ENCODE measurements at regions of chr12 and their contacts with region 1.

Region 1: GRCh38 chr12:116559162-116559935 is at the start of gene MAP1LC3B2:
- DNase-seq: peak; percentile 95
- H3K4me3 Mint-ChIP-seq: peak within 1 kb of the TSS; percentile 82
- H3K27ac Mint-ChIP-seq: peak within 1 kb of the TSS; percentile 97
- H3K4me1 Mint-ChIP-seq: peaks cover 37% of the 10 kb centered on the region
- H3K27me3 Mint-ChIP-seq: peaks cover 9% of the 10 kb centered on the region
- total RNA-seq, gene MAP1LC3B2: 0.68 TPM in 1 of 2 replicates, not detected in the other

Region 2: DNA sequence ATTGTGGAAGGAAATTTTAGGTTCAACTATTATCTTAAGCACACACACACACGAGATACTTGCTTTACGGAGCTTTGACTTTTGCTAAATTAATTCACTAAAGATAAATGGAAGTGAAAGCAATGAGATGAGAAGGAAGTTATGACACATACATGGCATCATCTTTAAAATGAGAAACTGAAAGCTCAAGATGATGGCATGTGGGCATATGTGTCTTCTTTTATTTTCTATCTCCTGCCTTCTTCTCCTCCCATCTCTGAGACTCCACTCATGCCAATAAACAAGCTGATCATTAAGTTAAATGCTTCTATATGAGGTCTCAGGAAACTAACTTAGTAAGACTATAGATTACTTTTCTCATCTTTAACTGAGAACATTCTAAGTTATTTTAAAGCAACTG is 498.6 kb before region 1 on chr12:
- intact Hi-C with region 1: loop called (anchors 1 kb)
- DNase-seq: peak; percentile 69
- H3K4me3 Mint-ChIP-seq: peak overlapping the region; percentile 81
- H3K27ac Mint-ChIP-seq: peak overlapping the region; percentile 91
- H3K4me1 Mint-ChIP-seq: peaks cover 22% of the 10 kb centered on the region
- H3K27me3 Mint-ChIP-seq: no peaks in the 10 kb centered on the region

Region 3: DNA sequence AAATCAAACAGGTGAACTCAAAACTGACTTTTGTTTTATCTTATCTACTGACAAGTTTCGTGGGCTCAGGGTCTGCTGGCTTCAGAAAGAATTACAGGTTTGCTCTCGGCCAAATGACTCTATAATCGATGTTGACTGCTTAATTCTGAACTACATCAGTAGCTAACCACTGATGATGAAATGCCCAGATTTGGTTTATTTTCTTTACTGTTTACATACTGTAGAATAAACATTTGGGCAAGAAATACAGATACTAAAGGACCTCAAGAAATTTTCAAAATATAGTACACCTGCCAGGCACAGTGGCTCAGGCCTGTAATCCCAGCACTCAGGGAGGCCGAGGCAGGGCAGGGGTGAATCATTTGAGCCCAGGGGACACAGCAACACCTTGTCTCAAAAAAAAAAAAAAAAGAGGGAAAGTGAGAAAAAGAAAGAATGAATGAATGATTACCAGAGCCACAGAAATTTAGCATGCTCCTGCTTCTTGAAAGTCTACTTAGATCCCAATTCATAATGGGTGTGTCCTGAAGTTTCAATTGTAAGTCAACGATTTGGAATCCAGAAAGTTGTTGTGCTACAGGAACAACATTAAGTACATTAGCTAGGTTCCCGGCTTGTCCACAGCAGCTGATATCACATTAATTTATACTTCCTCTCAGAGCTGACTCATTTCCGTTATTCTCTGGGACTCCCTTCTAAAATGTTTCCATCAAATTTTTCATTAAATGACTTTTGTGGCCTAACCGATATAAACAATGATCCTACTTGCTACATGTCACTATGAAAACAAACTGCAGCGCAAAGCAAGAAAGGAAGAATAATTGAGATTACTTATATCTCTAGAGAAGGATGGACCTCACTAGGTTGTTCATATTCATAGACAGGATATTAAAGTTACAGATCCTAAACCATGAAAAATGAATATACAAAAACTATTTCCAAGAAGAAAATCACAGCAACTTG is 416.1 kb before region 1 on chr12:
- intact Hi-C with region 1: loop called (anchors 2 kb)
- DNase-seq: no peak
- H3K4me3 Mint-ChIP-seq: peak overlapping the region; percentile 2
- H3K27ac Mint-ChIP-seq: peak overlapping the region; percentile 62
- H3K4me1 Mint-ChIP-seq: peaks cover 45% of the 10 kb centered on the region
- H3K27me3 Mint-ChIP-seq: no peaks in the 10 kb centered on the region

Region 4: GRCh38 chr12:116325336-116325664 is 234.0 kb before region 1 on chr12:
- intact Hi-C with region 1: loop called (anchors 2 kb)
- DNase-seq: peak; percentile 84
- H3K4me3 Mint-ChIP-seq: peak overlapping the region; percentile 51
- H3K27ac Mint-ChIP-seq: peak overlapping the region; percentile 81
- H3K4me1 Mint-ChIP-seq: peaks cover 29% of the 10 kb centered on the region
- H3K27me3 Mint-ChIP-seq: no peaks in the 10 kb centered on the region

Region 5: GRCh38 chr12:116591855-116592637 is 32.7 kb after region 1 on chr12:
- intact Hi-C with region 1: loop called (anchors 2 kb)
- DNase-seq: no peak
- H3K4me3 Mint-ChIP-seq: no peak overlapping the region
- H3K27ac Mint-ChIP-seq: no peak overlapping the region
- H3K4me1 Mint-ChIP-seq: peaks cover 30% of the 10 kb centered on the region
- H3K27me3 Mint-ChIP-seq: peaks cover 11% of the 10 kb centered on the region

Region 6: GRCh38 chr12:116924558-116925453 is 365.5 kb after region 1 on chr12:
- intact Hi-C with region 1: loop called (anchors 2 kb)
- DNase-seq: peak; percentile 91
- H3K4me3 Mint-ChIP-seq: peak overlapping the region; percentile 76
- H3K27ac Mint-ChIP-seq: peak overlapping the region; percentile 76
- H3K4me1 Mint-ChIP-seq: peaks cover 65% of the 10 kb centered on the region
- H3K27me3 Mint-ChIP-seq: peaks cover 10% of the 10 kb centered on the region